Activated naive CD4-positive, alpha-beta T cell treated with anti-CD3 and anti-CD28 coated beads for 36 hours (primary cell): ENCODE measurements at regions of chr3 and their contacts with region 1.

Region 1: DNA sequence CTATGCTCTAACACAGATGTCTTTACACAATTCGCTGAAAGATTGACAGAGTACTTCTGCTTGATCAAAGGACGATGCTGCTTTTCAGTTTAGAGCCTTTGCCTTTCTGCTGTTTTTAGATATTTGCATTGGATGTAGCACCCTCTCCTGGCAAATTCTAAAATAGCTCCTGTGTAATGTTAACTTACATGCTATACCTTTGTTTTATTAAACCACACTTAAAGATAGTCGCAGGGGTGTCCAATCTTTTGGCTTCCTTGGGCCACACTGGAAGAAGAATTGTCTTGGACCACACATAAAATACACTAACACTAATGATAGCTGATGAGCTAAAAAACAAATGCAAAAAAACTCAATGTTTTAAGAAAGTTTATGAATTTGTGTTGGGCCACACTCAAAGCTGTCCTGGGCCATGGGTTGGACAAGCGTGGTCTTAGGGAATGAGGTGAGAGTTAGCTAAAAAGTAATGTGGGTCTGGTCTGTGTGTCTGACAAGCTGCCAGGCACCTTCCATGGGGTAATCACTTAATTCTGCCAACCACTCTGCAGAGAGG is 62.9 kb downstream of the ATG7 start:
- DNase-seq: peak; percentile 9
- H3K4me3 Mint-ChIP-seq: no peak overlapping the region
- H3K27ac Mint-ChIP-seq: no peak overlapping the region
- H3K4me1 Mint-ChIP-seq: peaks cover 7% of the 10 kb centered on the region
- H3K27me3 Mint-ChIP-seq: no peaks in the 10 kb centered on the region

Region 2: GRCh38 chr3:10758304-10759061 is 576.6 kb before region 1 on chr3:
- CTCF ChIA-PET with region 1: no interaction called
- intact Hi-C with region 1: loop called (anchors 10 kb)
- DNase-seq: peak; percentile 67
- H3K4me3 Mint-ChIP-seq: no peak overlapping the region
- H3K27ac Mint-ChIP-seq: no peak overlapping the region
- H3K4me1 Mint-ChIP-seq: peaks cover 6% of the 10 kb centered on the region
- H3K27me3 Mint-ChIP-seq: peaks cover 32% of the 10 kb centered on the region

Region 3: GRCh38 chr3:11060500-11061251 is 274.5 kb before region 1 on chr3:
- CTCF ChIA-PET with region 1: interaction called, 30 read pairs
- intact Hi-C with region 1: loop called (anchors 1 kb)
- DNase-seq: peak; percentile 51
- H3K4me3 Mint-ChIP-seq: no peak overlapping the region
- H3K27ac Mint-ChIP-seq: no peak overlapping the region
- H3K4me1 Mint-ChIP-seq: no peaks in the 10 kb centered on the region
- H3K27me3 Mint-ChIP-seq: peaks cover 13% of the 10 kb centered on the region

Region 4: GRCh38 chr3:11260460-11260859 is 74.7 kb before region 1 on chr3:
- CTCF ChIA-PET with region 1: no interaction called
- intact Hi-C with region 1: loop called (anchors 1 kb)
- DNase-seq: no peak
- H3K4me3 Mint-ChIP-seq: no peak overlapping the region
- H3K27ac Mint-ChIP-seq: no peak overlapping the region
- H3K4me1 Mint-ChIP-seq: no peaks in the 10 kb centered on the region
- H3K27me3 Mint-ChIP-seq: no peaks in the 10 kb centered on the region

Region 5: GRCh38 chr3:11651900-11652299 is 316.8 kb after region 1 on chr3:
- CTCF ChIA-PET with region 1: interaction called, 6 read pairs
- intact Hi-C with region 1: loop called (anchors 5 kb)
- DNase-seq: no peak
- H3K4me3 Mint-ChIP-seq: no peak overlapping the region
- H3K27ac Mint-ChIP-seq: no peak overlapping the region
- H3K4me1 Mint-ChIP-seq: peaks cover 6% of the 10 kb centered on the region
- H3K27me3 Mint-ChIP-seq: no peaks in the 10 kb centered on the region